Activated CD4-positive, alpha-beta T cell treated with anti-CD3 and anti-CD28 coated beads for 36 hours (primary cell): ENCODE measurements at regions of chr21 and their contacts with region 1.

Region 1: GRCh38 chr21:29232601-29233546 is 65.8 kb upstream of the BACH1 start:
- DNase-seq: no peak
- ATAC-seq: peak; percentile 8
- H3K4me3 Mint-ChIP-seq: no peak overlapping the region
- H3K27ac Mint-ChIP-seq: peak overlapping the region; percentile 76
- H3K4me1 Mint-ChIP-seq: peaks cover 49% of the 10 kb centered on the region
- H3K27me3 Mint-ChIP-seq: peaks cover 5% of the 10 kb centered on the region

Region 2: GRCh38 chr21:29018540-29018939 is 214.3 kb before region 1 on chr21:
- CTCF ChIA-PET with region 1: no interaction called
- POLR2A ChIA-PET with region 1: no interaction called
- intact Hi-C with region 1: loop called in 1 of 2 experiments (anchors 5 kb)
- DNase-seq: peak; percentile 19
- ATAC-seq: no peak
- H3K4me3 Mint-ChIP-seq: peak overlapping the region; percentile 80
- H3K27ac Mint-ChIP-seq: peak overlapping the region; percentile 93
- H3K4me1 Mint-ChIP-seq: peaks cover 34% of the 10 kb centered on the region
- H3K27me3 Mint-ChIP-seq: no peaks in the 10 kb centered on the region

Region 3: DNA sequence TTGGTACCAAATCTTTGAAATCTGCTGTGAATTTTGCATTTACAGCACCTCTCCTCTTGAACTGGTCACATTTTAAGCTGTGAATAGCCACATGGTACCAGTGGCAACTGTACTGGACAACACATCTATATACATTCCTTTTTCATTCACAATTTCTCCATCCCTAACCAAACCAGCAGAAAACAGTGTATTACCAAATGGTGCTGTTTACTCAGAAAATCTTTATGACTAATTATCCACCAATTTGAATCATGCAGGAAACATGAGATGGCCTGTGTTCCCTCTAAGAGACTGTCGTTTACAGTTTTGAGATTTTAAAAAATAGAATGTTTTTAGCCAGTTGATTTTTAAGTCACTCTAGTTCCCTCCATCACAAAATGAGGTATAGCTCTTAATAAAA is 141.8 kb before region 1 on chr21:
- CTCF ChIA-PET with region 1: no interaction called
- POLR2A ChIA-PET with region 1: no interaction called
- intact Hi-C with region 1: loop called (anchors 5 kb)
- DNase-seq: no peak
- ATAC-seq: peak; percentile 71
- H3K4me3 Mint-ChIP-seq: no peak overlapping the region
- H3K27ac Mint-ChIP-seq: no peak overlapping the region
- H3K4me1 Mint-ChIP-seq: peaks cover 17% of the 10 kb centered on the region
- H3K27me3 Mint-ChIP-seq: no peaks in the 10 kb centered on the region

Region 4: DNA sequence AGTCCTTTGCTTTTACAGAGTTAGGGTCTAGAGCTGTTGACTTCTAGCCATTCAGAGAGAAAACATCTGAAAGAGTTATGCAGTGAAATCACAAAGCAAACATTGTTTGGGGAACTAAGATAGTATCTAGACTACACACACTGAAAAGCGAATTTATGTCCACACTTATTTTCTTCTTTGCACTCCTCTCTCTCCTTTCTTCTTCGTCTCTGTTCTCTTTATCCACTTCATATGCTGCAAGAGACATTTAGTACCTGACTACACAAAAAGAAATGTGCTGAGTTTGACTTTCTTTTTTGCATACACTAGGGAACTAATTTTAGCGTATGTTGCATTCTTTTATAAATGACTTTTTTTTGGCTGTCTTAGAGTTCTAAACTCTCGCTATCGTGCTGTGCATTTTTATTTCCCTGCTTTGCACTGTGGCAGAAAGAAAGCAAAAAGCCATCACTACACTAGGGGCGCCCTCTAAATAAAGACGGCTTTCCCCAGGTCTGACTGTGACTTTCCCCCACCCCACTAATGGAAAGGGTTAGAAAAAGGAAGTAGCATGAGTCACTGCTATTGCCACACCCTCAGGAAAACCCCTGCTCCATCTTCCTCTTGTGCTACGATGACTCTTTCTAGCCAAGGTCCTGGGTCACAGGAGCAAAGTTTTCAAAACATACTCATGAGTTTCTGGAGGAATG is 36.7 kb before region 1 on chr21:
- CTCF ChIA-PET with region 1: interaction called, 3 read pairs
- POLR2A ChIA-PET with region 1: no interaction called
- intact Hi-C with region 1: loop called (anchors 1 kb)
- DNase-seq: peak; percentile 85
- ATAC-seq: peak; percentile 97
- H3K4me3 Mint-ChIP-seq: peak overlapping the region; percentile 64
- H3K27ac Mint-ChIP-seq: peak overlapping the region; percentile 93
- H3K4me1 Mint-ChIP-seq: peaks cover 34% of the 10 kb centered on the region
- H3K27me3 Mint-ChIP-seq: peaks cover 2% of the 10 kb centered on the region

Region 5: GRCh38 chr21:29245104-29245643 is 12.3 kb after region 1 on chr21:
- CTCF ChIA-PET with region 1: interaction called, 12 read pairs
- POLR2A ChIA-PET with region 1: interaction called, 7 read pairs
- intact Hi-C with region 1: loop called (anchors 1 kb)
- DNase-seq: peak; percentile 53
- ATAC-seq: peak; percentile 99
- H3K4me3 Mint-ChIP-seq: no peak overlapping the region
- H3K27ac Mint-ChIP-seq: peak overlapping the region; percentile 28
- H3K4me1 Mint-ChIP-seq: peaks cover 13% of the 10 kb centered on the region
- H3K27me3 Mint-ChIP-seq: peaks cover 8% of the 10 kb centered on the region

Region 6: GRCh38 chr21:29372063-29372802 is 139.4 kb after region 1 on chr21:
- CTCF ChIA-PET with region 1: interaction called, 3 read pairs
- POLR2A ChIA-PET with region 1: no interaction called
- intact Hi-C with region 1: loop called in 1 of 2 experiments (anchors 1 kb)
- DNase-seq: peak; percentile 61
- ATAC-seq: peak; percentile 65
- H3K4me3 Mint-ChIP-seq: no peak overlapping the region
- H3K27ac Mint-ChIP-seq: peak overlapping the region; percentile 38
- H3K4me1 Mint-ChIP-seq: peaks cover 30% of the 10 kb centered on the region
- H3K27me3 Mint-ChIP-seq: no peaks in the 10 kb centered on the region

Region 7: DNA sequence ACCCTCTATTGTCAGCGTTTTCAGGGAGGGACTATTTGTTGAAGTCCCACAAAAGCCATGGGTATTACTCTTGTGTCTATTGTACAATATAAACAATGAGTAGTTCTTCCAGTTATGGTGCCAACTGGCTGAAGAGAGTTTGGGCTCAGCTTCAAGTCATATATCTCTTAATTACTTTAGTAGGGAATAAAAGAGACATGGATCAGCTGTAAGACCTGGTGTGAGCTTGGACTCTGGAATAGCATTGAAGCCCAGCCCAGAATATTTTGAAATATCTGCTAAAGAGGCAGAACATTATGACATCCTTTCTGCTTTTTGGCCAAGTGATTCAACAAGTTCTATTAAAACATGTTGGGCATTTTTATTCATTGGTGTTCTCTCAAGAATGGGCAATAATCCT is 290.8 kb after region 1 on chr21:
- CTCF ChIA-PET with region 1: no interaction called
- POLR2A ChIA-PET with region 1: no interaction called
- intact Hi-C with region 1: no loop called
- DNase-seq: no peak
- ATAC-seq: no peak
- H3K4me3 Mint-ChIP-seq: no peak overlapping the region
- H3K27ac Mint-ChIP-seq: no peak overlapping the region
- H3K4me1 Mint-ChIP-seq: no peaks in the 10 kb centered on the region
- H3K27me3 Mint-ChIP-seq: no peaks in the 10 kb centered on the region